Panc1 (cell line): ENCODE measurements at regions of chr11 and their contacts with region 1.

Region 1: DNA sequence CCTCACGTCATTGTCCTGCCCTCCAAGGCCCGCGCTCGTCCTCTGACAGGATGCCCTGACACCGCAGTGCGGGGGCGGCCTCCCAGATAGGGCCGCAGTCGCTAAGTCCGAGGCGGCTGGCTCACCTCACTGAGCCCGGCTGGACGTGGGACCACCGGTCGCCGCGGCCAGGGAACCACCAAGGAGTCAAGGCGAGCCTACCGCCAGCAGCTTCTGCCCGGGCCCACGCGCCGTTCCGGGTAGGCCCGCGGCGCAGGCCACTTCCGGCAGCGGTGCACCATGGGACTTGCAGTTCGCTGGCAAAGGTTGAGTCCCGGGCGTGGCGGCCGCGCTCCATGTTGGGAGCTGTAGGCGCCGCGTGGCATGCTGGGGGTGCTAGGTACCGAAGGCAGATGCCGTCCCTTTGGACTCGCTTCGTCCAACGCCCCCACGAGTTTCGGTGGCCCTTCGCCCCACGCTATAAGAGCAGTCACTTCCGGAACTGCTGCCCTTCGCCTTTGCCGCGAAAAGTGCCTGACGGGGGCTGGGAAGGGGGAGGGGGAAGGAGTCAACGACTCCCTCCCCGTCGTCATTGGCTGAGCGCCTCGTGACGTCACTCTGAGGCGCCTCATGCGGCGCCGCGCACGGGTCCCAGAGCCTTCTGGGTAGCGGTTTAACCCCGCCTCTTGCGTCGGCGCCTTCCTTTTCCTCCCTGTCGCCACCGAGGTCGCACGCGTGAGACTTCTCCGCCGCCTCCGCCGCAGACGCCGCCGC is at the start of gene RPLP2:
- DNase-seq: peak; percentile 97
- ATAC-seq: peak; percentile 90
- H3K4me3 ChIP-seq: peak within 1 kb of the TSS; percentile 85 to 96
- H3K27ac ChIP-seq: peak within 1 kb of the TSS; percentile 99
- H3K4me1 ChIP-seq: peaks cover 45% of the 10 kb centered on the region
- H3K27me3 ChIP-seq: no peaks in the 10 kb centered on the region
- CTCF ChIP-seq: no peak
- total RNA-seq, gene RPLP2: 3,468 TPM

Region 2: GRCh38 chr11:304915-305843 is 504.3 kb before region 1 on chr11:
- CTCF ChIA-PET with region 1: no interaction called
- POLR2A ChIA-PET with region 1: no interaction called
- in situ Hi-C with region 1: no loop called
- intact Hi-C with region 1: no loop called
- DNase-seq: peak; percentile 53
- ATAC-seq: no peak
- H3K4me3 ChIP-seq: no peak overlapping the region
- H3K27ac ChIP-seq: peak overlapping the region; percentile 90
- H3K4me1 ChIP-seq: peaks cover 50% of the 10 kb centered on the region
- H3K27me3 ChIP-seq: no peaks in the 10 kb centered on the region
- CTCF ChIP-seq: peak; percentile 91

Region 3: GRCh38 chr11:439315-440064 is 370.0 kb before region 1 on chr11:
- CTCF ChIA-PET with region 1: interaction called, 10 read pairs
- POLR2A ChIA-PET with region 1: no interaction called
- in situ Hi-C with region 1: no loop called
- intact Hi-C with region 1: no loop called
- DNase-seq: no peak
- ATAC-seq: no peak
- H3K4me3 ChIP-seq: no peak overlapping the region
- H3K27ac ChIP-seq: no peak overlapping the region
- H3K4me1 ChIP-seq: peaks cover 21% of the 10 kb centered on the region
- H3K27me3 ChIP-seq: no peaks in the 10 kb centered on the region
- CTCF ChIP-seq: no peak

Region 4: DNA sequence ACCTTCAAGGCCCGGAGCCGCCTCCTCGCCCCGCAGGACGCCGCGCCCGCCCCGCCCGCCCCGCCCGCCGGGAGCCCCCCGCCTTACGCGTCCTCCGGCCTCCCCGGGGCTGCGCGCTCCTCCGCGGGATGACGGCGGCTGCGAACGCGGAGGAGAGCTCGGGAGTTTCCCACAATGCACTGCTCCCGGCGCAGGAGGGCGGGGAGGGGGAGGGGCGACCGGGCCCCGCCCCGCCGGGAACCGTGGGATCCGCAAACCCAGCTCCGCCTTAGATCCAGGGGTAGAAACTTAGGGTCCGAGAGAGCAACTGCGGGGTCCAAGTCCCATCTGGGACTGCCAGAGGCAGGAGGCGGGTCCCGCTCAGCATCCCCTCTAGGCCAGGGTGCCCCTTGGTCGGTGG is 19.5 kb before region 1 on chr11 and contains the start of gene CEND1:
- CTCF ChIA-PET with region 1: no interaction called
- POLR2A ChIA-PET with region 1: interaction called, 13 read pairs
- in situ Hi-C with region 1: no loop called
- intact Hi-C with region 1: no loop called
- DNase-seq: no peak
- ATAC-seq: peak; percentile 36
- H3K4me3 ChIP-seq: peak within 1 kb of the TSS; percentile 51 to 59
- H3K27ac ChIP-seq: peak within 1 kb of the TSS; percentile 86
- H3K4me1 ChIP-seq: peaks cover 50% of the 10 kb centered on the region
- H3K27me3 ChIP-seq: no peaks in the 10 kb centered on the region
- CTCF ChIP-seq: no peak
- total RNA-seq, gene CEND1: 15.9 TPM